ENCODE measurements at regions of chr2 and their contacts with region 1.

Region 1: GRCh38 chr2:229849073-229849472 is 72.7 kb downstream of the TRIP12 start:
- DNase-seq: no peak
- H3K4me3 ChIP-seq: no peak overlapping the region
- H3K27ac ChIP-seq: no peak overlapping the region
- H3K4me1 ChIP-seq: no peaks in the 10 kb centered on the region
- H3K27me3 ChIP-seq: no peaks in the 10 kb centered on the region
- CTCF ChIP-seq: no peak

Region 2: GRCh38 chr2:229775614-229776313 is 73.3 kb before region 1 on chr2:
- CTCF ChIA-PET with region 1: interaction called, 12 read pairs
- POLR2A ChIA-PET with region 1: no interaction called
- intact Hi-C with region 1: no loop called
- DNase-seq: no peak
- H3K4me3 ChIP-seq: no peak overlapping the region
- H3K27ac ChIP-seq: no peak overlapping the region
- H3K4me1 ChIP-seq: no peaks in the 10 kb centered on the region
- H3K27me3 ChIP-seq: no peaks in the 10 kb centered on the region
- CTCF ChIP-seq: no peak